PC-9 (cell line): ENCODE measurements at regions of chr21 and their contacts with region 1.

Region 1: DNA sequence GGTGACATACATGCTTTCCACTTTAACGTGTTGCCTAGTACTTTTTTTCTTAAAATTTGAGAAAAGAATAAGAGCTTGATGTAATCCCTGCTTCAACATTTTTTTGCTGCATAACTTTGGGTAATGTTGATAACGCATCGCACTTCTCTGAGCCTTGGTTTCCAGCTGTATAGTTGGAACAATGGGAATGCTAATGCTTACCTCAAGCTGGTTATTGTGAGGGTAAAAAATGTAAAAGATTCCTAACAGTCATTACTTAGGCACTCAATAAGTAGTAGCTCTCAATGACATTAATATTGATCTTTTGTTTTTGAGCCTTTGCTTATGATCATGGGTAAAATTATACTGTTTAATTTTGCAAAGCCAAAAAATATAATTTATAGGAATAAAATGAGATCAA is 683.3 kb upstream of the CXADR start:
- DNase-seq: no peak
- H3K4me3 ChIP-seq: no peak overlapping the region
- H3K27ac ChIP-seq: no peak overlapping the region
- H3K4me1 ChIP-seq: no peaks in the 10 kb centered on the region
- H3K27me3 ChIP-seq: no peaks in the 10 kb centered on the region
- CTCF ChIP-seq: no peak

Region 2: DNA sequence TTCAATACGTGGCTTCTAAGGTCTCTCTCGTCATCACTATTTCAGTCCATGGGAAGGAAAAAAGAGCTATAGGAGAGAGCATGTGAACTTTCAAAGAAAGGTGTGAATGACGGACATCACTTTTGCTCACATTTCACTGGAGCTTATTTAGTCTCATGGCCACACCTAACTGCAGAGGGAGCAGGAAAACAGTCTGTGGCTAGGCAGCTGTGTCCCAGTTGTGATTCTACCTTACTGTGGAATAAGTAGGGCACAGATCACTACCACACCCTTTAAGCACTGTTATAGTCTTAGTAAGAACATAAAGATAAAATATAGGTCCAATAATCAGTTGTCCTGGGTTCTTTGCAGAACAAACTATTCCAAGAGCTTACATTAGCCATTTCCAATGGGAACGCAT is 1957.7 kb before region 1 on chr21:
- CTCF ChIA-PET with region 1: no interaction called
- POLR2A ChIA-PET with region 1: interaction called, 13 read pairs
- intact Hi-C with region 1: no loop called
- DNase-seq: no peak
- H3K4me3 ChIP-seq: no peak overlapping the region
- H3K27ac ChIP-seq: no peak overlapping the region
- H3K4me1 ChIP-seq: peaks cover 50% of the 10 kb centered on the region
- H3K27me3 ChIP-seq: no peaks in the 10 kb centered on the region
- CTCF ChIP-seq: no peak

Region 3: GRCh38 chr21:16514316-16514715 is 315.2 kb before region 1 on chr21:
- CTCF ChIA-PET with region 1: no interaction called
- POLR2A ChIA-PET with region 1: no interaction called
- intact Hi-C with region 1: no loop called
- DNase-seq: no peak
- H3K4me3 ChIP-seq: no peak overlapping the region
- H3K27ac ChIP-seq: no peak overlapping the region
- H3K4me1 ChIP-seq: no peaks in the 10 kb centered on the region
- H3K27me3 ChIP-seq: no peaks in the 10 kb centered on the region
- CTCF ChIP-seq: no peak